AG04450 (cell line): ENCODE measurements at regions of chr14 and their contacts with region 1.

Region 1: GRCh38 chr14:54691525-54692283 is 124.8 kb downstream of the SAMD4A start:
- DNase-seq: no peak
- H3K4me3 ChIP-seq: no peak overlapping the region
- H3K27ac ChIP-seq: no peak overlapping the region
- H3K27me3 ChIP-seq: no peaks in the 10 kb centered on the region
- CTCF ChIP-seq: peak; percentile 96

Region 2: DNA sequence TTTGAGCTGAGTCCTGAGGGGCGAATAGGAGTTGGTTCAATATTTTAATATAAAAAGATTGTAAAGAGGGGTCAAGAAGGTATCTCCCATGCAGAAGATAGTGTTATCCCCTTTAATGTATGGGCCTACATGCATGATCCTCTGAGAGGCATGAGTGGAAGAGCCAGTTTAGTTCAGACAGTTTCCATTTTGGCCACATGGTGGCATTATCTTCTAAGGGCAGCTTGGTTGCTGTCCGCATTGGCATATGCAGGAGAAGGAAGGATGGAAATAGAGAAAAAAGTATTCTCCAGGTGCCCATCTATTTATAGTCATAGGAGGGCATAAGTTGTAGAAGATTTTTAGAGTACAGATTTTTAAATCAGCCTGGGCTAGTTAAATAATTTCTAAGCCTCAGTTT is 119.4 kb before region 1 on chr14:
- CTCF ChIA-PET with region 1: interaction called, 99 read pairs
- POLR2A ChIA-PET with region 1: interaction called, 4 read pairs
- DNase-seq: no peak
- H3K4me3 ChIP-seq: no peak overlapping the region
- H3K27ac ChIP-seq: no peak overlapping the region
- H3K27me3 ChIP-seq: no peaks in the 10 kb centered on the region
- CTCF ChIP-seq: peak; percentile 46

Region 3: DNA sequence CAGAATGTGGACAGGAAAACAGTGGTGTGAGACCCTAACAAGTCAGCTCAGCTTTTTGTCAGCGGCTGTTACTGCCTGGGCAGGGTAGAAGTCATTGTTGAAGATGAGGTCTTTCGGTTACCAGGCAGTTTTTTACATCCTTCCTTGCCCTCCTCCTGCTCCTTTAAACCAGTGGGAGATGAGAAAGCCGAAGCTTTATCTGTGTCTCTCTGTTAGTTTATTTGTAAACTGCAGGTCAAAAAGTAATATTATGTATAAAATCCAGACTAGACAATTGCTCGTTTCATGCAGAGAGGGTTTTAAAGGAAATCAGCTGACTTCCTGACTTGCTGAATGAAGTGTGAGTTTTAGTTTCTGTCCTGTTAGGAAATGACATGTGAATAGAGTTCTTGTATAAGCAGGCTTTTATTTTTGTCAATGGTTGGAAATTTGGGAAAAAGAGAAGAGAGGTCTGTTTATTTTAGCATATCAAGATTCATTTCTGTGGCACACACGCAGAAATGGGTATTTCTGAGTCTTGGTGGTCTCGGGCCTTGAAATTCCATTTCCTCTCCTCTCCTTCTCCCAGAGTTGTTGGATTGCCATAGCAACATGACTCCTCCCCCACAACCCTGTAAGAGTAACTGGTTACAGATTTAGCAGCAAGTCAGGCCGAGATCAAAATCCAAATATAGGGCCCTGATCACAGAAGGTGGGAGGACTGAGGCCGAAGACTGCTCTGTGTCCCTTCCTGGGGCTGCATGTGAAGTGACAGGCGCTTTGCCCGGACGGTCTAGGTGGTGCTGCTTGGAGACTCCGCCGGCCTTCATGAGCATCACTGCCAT is 64.0 kb before region 1 on chr14:
- CTCF ChIA-PET with region 1: interaction called, 15 read pairs
- POLR2A ChIA-PET with region 1: no interaction called
- DNase-seq: no peak
- H3K4me3 ChIP-seq: peak overlapping the region; percentile 22
- H3K27ac ChIP-seq: peak overlapping the region; percentile 74
- H3K27me3 ChIP-seq: no peaks in the 10 kb centered on the region
- CTCF ChIP-seq: no peak

Region 4: DNA sequence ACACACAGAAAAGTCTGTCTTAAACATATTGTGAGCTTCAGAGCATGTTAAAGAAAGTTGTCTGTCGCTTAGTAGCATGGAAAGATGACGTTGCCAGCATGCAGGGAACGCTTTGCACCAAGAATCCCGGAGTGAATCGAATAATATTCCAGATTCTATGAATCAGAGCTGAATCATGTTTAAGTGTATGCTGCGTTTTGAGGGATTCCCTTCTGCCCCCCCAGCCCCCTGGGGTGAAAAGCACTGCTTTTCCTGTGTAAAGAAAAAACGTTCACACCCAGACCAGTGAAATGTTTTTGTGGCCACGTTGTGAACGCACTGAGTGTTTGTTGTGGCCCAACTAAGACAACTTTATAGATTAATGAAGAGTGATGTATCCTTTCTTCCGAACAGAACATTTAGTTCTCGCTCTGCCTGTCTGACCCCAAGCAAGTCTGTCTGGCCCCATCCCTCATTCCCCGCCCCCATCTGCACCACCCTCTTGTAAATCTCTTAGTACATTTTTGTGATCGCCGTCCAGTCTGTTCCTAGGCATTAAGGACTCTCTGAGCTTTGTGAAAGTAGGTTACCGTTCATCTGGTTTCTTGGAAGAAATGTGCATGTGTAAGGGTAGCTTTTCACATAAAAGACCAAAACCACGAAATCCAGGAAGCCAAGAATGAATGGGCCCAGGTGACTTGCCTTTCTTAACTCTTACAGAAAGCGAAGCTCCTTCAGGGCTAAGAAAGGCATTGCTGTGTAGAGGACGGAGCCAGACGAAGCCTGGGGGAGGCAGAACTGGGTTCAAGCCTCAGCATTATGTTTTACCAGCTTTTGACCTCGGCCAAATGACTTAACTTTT is 21.8 kb before region 1 on chr14:
- CTCF ChIA-PET with region 1: interaction called, 14 read pairs
- POLR2A ChIA-PET with region 1: no interaction called
- DNase-seq: peak; percentile 15
- H3K4me3 ChIP-seq: no peak overlapping the region
- H3K27ac ChIP-seq: no peak overlapping the region
- H3K27me3 ChIP-seq: no peaks in the 10 kb centered on the region
- CTCF ChIP-seq: no peak

Region 5: GRCh38 chr14:54712465-54713200 is 20.9 kb after region 1 on chr14:
- CTCF ChIA-PET with region 1: interaction called, 11 read pairs
- POLR2A ChIA-PET with region 1: no interaction called
- DNase-seq: no peak
- H3K4me3 ChIP-seq: no peak overlapping the region
- H3K27ac ChIP-seq: peak overlapping the region; percentile 79
- H3K27me3 ChIP-seq: no peaks in the 10 kb centered on the region
- CTCF ChIP-seq: no peak